Activated CD4-positive, alpha-beta T cell treated with anti-CD3 and anti-CD28 coated beads, Interleukin-2, amount 10 ng/mL, durations not matched to agents 24 days and 14 days (primary cell): ENCODE measurements at regions of chr17 and their contacts with region 1.

Region 1: GRCh38 chr17:8894673-8895578 is 27.5 kb upstream of the PIK3R6 start:
- DNase-seq: peak; percentile 83
- H3K4me3 Mint-ChIP-seq: no peak overlapping the region
- H3K27ac Mint-ChIP-seq: peak overlapping the region; percentile 16
- H3K4me1 Mint-ChIP-seq: peaks cover 65% of the 10 kb centered on the region
- H3K27me3 Mint-ChIP-seq: no peaks in the 10 kb centered on the region

Region 2: DNA sequence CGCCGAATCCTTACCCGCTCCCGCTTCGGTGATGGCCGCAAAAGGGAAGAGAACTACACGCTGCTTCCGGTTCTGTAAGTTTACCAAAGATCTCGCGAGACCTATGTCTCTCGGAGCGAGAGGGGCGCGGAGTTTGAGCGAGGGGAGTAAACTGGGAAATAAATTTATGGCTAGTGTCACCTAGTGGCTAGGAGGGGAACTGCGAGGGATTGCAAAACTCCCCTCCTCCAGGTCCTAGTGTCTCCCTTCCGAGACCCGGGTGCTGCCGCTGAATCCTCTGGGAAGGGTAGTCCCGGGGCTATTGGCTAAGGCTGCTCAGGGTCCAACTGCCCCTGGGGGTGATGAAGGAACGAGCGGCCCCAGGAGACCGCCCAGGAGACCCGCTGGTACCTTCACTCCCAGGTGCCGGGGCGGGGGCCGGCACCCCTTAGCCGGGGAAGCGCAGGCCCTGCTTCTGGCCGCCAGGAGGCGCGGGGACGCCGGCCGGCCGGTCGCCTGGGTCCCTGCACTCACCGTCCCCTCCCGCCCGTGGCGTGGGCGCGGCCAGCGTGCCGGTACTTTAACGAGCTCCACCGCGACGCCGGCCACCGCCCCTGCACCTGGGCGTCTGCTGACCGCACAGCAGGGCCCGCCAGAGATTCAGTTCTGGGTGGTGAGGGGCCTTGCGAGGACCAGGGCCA is 511.6 kb before region 1 on chr17 and contains the start of gene RPL26:
- intact Hi-C with region 1: loop called (anchors 10 kb)
- DNase-seq: peak; percentile 98
- H3K4me3 Mint-ChIP-seq: peak within 1 kb of the TSS; percentile 99
- H3K27ac Mint-ChIP-seq: peak within 1 kb of the TSS; percentile 95
- H3K4me1 Mint-ChIP-seq: peaks cover 40% of the 10 kb centered on the region
- H3K27me3 Mint-ChIP-seq: no peaks in the 10 kb centered on the region
- total RNA-seq, gene RPL26: 2,460 and 2,469 TPM in 2 replicates

Region 3: DNA sequence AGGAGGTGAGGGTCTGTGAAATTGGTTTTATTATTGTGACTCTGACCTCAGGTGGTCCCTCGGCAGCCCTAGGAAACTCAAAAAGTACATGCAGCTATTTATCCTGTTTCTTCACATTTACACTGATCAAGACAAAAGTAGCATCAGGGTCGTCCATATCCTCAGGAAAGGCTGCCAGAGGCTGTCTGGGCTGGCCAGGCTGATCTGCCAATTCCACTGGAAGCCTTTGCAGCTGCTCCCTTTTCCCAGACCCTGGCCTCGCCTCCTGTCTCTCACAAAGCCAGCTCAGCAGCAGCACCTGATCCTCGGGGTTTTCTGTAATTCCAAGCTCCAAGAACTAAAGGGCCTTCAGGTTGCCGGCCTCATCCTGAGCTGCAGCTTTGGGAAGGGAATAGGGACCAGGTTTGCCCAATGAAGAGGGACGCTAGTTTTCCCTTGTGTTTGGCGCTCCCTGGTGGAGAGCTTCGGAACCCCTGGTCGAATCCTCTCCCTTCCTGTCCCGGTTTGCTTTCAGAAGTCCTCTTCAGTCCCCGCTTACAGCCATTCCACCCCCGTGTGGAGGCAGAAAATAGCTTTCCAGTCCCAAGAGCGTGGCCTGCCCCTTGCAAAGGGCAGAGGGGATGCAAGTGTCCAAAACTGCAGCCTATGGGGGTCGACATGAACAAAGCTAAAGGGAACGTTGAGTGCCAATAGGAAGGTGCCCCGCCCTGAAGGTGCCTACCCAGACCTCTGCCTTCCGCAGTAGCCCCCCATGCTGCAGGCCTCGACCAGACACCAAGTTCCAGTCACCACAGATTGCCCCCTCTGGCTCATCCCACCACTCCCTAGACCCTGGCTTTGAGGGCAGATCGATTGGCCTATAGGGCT is 109.1 kb before region 1 on chr17:
- intact Hi-C with region 1: loop called (anchors 10 kb)
- DNase-seq: peak; percentile 87
- H3K4me3 Mint-ChIP-seq: no peak overlapping the region
- H3K27ac Mint-ChIP-seq: no peak overlapping the region
- H3K4me1 Mint-ChIP-seq: peaks cover 2% of the 10 kb centered on the region
- H3K27me3 Mint-ChIP-seq: peaks cover 10% of the 10 kb centered on the region

Region 4: GRCh38 chr17:8832711-8833352 is 62.1 kb before region 1 on chr17:
- intact Hi-C with region 1: no loop called
- DNase-seq: peak; percentile 79
- H3K4me3 Mint-ChIP-seq: no peak overlapping the region
- H3K27ac Mint-ChIP-seq: no peak overlapping the region
- H3K4me1 Mint-ChIP-seq: no peaks in the 10 kb centered on the region
- H3K27me3 Mint-ChIP-seq: no peaks in the 10 kb centered on the region

Region 5: DNA sequence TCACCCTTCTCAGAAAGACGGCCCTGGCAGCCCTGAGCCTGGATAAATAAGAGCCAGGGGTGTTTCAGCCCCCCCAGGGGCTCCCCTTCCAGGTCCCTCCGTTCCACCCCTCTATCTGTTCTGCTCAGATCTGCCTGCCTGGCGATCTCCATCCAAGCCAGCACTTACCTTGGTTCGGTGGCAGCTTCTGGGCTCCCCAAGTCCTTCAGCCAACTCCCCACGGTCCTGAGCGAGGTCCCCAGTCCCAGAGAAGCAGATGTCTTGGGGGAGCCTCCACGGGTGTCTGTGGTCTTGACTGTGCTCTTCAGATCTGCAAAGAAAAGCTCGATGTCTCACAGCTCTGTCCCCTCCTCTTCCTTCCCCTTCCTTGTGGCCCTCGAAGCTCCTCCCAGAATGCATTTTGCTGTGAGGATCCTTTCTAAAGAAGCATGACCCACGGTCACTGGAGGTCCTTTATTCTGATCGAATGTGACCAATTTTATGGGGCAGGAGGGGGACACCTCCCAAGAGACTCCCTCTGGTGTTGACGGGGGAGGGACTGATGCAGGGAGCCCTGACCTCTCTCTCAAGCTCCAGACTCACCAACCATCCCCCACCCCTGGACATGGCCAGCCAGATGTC is 27.5 kb before region 1 on chr17 and contains the start of gene PIK3R6:
- intact Hi-C with region 1: no loop called
- DNase-seq: peak; percentile 73
- H3K4me3 Mint-ChIP-seq: peak within 1 kb of the TSS; percentile 95
- H3K27ac Mint-ChIP-seq: peak within 1 kb of the TSS; percentile 92
- H3K4me1 Mint-ChIP-seq: peaks cover 46% of the 10 kb centered on the region
- H3K27me3 Mint-ChIP-seq: no peaks in the 10 kb centered on the region
- total RNA-seq, gene PIK3R6: 3.7 and 4.5 TPM in 2 replicates

Region 6: DNA sequence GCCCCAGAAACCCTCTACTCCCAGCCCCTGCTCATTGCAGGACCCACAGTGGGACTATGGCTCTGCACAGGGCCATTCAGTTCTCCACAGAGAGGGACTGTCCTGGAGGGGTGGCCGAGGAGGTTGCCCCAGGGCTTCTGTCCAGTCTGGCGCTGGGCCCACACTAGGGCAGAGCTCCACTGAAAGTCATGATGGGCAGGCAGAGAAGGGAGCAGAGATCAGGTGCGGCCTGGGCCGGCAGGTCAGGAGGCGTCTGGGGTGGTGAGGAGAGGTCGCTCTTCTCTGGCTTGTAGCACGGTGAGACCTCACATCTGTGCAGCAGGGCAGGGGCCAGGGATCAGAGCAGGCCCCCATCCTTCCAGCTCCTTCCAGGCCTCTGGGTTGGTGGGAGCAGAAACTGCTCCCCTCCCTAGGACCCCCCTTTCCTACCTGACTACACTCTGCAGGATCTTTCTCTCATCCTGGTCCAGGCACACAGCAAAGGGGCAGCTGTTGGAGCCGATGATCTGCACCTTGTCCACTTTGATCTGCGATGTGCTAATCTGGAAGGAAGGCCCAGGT is 14.4 kb before region 1 on chr17:
- intact Hi-C with region 1: no loop called
- DNase-seq: no peak
- H3K4me3 Mint-ChIP-seq: no peak overlapping the region
- H3K27ac Mint-ChIP-seq: no peak overlapping the region
- H3K4me1 Mint-ChIP-seq: peaks cover 2% of the 10 kb centered on the region
- H3K27me3 Mint-ChIP-seq: no peaks in the 10 kb centered on the region

Region 7: DNA sequence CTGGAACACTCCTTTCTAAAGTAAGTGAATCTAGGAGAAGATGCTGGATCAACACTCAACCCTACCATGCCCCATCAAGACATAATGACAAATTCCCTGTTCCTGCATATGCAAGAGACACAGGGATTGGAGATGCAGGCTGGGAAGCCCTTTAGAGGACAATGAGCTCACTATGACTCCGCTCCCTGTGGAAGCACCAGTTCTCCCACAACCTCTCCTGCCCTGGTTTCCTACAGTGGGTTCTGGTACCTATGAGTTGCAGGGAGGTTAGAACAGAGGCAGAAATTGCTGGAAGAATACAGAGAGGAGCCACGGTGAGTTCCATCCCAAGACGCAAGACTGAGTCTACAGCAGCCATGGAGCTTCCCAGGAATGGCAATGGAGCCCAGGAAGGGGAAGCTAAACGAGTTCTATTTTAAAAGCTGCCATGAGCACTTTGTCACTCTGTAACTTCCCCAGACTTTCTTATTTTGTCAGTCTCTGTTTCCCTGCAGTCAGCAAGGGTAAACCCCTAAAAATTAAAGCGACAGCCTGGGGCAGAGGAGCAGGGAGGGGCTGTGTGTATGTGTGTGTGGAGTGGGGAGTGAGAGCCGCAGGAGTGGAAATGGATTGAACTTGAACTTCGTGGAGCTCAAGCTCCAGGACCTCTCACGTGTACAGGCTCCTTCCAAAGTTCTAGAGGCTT is 14.8 kb after region 1 on chr17:
- intact Hi-C with region 1: no loop called
- DNase-seq: no peak
- H3K4me3 Mint-ChIP-seq: no peak overlapping the region
- H3K27ac Mint-ChIP-seq: no peak overlapping the region
- H3K4me1 Mint-ChIP-seq: peaks cover 13% of the 10 kb centered on the region
- H3K27me3 Mint-ChIP-seq: no peaks in the 10 kb centered on the region

Region 8: GRCh38 chr17:8922451-8922850 is 27.5 kb after region 1 on chr17:
- intact Hi-C with region 1: loop called (anchors 1 kb)
- DNase-seq: peak; percentile 43
- H3K4me3 Mint-ChIP-seq: peak overlapping the region; percentile 43
- H3K27ac Mint-ChIP-seq: peak overlapping the region; percentile 90
- H3K4me1 Mint-ChIP-seq: peaks cover 10% of the 10 kb centered on the region
- H3K27me3 Mint-ChIP-seq: no peaks in the 10 kb centered on the region

Region 9: DNA sequence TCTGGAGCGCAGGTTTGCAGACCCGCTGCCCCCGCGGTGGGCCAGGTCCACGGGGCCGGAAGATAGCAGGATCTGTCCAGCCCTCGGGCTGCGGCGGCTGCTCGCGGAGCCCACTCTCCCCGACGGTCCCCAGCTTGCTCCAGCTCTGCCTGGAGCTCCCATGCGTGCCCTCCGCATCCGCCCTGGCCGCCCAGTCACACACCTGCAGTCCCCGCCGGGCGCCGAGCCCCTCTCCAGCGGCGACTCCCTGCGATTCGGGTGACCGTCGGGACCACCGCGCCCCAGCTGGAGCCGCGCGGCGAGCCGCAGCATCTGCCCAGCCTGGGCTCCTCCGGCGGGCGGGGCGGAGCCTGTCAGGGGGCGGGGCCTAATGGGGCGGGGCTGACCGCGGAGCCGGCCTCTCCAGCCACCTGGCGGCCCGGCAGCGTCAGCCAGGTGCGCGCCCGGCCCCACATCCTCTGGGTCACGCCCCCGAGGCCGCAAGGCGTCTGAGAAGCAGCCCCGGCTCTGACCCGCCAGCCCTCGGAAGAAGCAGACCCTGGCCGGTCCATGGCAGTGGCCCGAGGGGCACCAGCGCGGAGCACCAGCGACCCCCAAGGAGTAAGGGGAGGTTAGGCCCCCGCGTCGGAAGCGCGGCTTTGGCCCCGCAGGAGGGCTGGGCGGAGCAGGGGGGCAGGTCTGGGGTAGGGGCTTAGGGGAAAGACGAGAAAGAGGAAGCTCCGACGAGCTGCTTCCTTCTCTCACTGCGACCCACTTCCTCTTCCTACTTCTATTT is 70.7 kb after region 1 on chr17 and contains the start of gene PIK3R5:
- intact Hi-C with region 1: loop called (anchors 1 kb)
- DNase-seq: peak; percentile 91
- H3K4me3 Mint-ChIP-seq: peak within 1 kb of the TSS; percentile 93
- H3K27ac Mint-ChIP-seq: peak within 1 kb of the TSS; percentile 96
- H3K4me1 Mint-ChIP-seq: peaks cover 49% of the 10 kb centered on the region
- H3K27me3 Mint-ChIP-seq: no peaks in the 10 kb centered on the region
- total RNA-seq, gene PIK3R5: 32.6 and 36.8 TPM in 2 replicates